Ascending aorta (tissue), 2 donors: ENCODE measurements at regions of chr15 and their contacts with region 1.

Region 1: GRCh38 chr15:86255247-86255646 is 175.6 kb downstream of the AGBL1 start:
- DNase-seq: no peak
- H3K4me3 ChIP-seq: no peak overlapping the region
- H3K27ac ChIP-seq: no peak overlapping the region
- H3K4me1 ChIP-seq: no peaks in the 10 kb centered on the region
- H3K27me3 ChIP-seq: no peaks in the 10 kb centered on the region
- CTCF ChIP-seq: no peak

Region 2: GRCh38 chr15:86193716-86194380 is 61.4 kb before region 1 on chr15:
- intact Hi-C with region 1: loop called (anchors 10 kb)
- DNase-seq: no peak
- H3K4me3 ChIP-seq: no peak overlapping the region
- H3K27ac ChIP-seq: no peak overlapping the region
- H3K4me1 ChIP-seq: no peaks in the 10 kb centered on the region
- H3K27me3 ChIP-seq: no peaks in the 10 kb centered on the region
- CTCF ChIP-seq: no peak

Region 3: GRCh38 chr15:86362555-86362954 is 107.3 kb after region 1 on chr15:
- intact Hi-C with region 1: no loop called
- DNase-seq: no peak
- H3K4me3 ChIP-seq: no peak overlapping the region
- H3K27ac ChIP-seq: no peak overlapping the region
- H3K4me1 ChIP-seq: no peaks in the 10 kb centered on the region
- H3K27me3 ChIP-seq: no peaks in the 10 kb centered on the region
- CTCF ChIP-seq: no peak